Upper lobe of right lung (tissue), 1 donor: ENCODE measurements at regions of chr6 and their contacts with region 1.

Region 1: GRCh38 chr6:2931970-2932748 is 29.1 kb upstream of the SERPINB9 start:
- DNase-seq: peak; percentile 75
- ATAC-seq: peak; percentile 99
- H3K4me3 ChIP-seq: no peak overlapping the region
- H3K27ac ChIP-seq: no peak overlapping the region
- H3K4me1 ChIP-seq: peaks cover 4% of the 10 kb centered on the region
- H3K27me3 ChIP-seq: no peaks in the 10 kb centered on the region
- CTCF ChIP-seq: peak; percentile 98

Region 2: DNA sequence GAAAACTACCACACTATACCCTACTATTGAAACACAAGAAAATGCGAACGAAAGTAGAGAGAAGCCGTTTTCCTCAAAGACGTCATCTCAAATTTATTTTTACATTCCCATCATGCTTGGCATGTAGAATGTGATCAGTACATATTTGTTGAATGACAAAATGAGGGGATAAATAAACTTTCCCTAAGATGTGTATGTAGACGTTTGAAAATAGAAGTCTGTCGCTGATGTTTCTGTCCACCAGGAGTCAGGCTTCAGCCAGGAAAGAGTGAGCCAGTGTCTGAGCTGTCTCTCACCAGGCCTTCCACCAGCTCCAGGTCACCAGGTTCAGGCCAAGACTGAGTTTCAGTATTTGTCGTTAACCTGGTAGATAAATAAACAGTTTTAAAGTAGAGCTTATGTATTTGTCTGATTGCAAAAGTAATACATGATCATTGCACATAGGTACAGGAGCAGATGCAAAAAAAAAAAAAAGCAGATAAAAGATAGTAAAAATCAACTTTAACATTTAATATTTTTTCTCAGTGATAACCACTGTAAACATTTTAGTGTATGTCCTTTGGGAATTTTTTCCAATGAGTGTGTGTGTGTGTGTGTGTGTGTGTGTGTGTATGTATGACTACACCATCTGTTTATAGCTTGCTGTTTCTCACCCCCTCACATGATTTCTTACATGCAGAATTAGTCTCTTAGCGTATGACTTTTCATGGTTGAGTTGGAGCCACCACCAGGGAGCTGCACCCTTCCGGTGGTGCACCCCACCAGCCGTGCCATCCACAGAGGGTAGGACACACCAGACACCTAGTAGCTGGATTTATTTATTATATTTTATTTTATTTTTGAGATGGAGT is 140.8 kb before region 1 on chr6:
- intact Hi-C with region 1: loop called (anchors 10 kb)
- DNase-seq: no peak
- ATAC-seq: peak; percentile 87
- H3K4me3 ChIP-seq: no peak overlapping the region
- H3K27ac ChIP-seq: peak overlapping the region; percentile 71
- H3K4me1 ChIP-seq: peaks cover 25% of the 10 kb centered on the region
- H3K27me3 ChIP-seq: no peaks in the 10 kb centered on the region
- CTCF ChIP-seq: peak; percentile 79

Region 3: GRCh38 chr6:2841264-2842138 is 90.7 kb before region 1 on chr6 and contains the start of gene SERPINB1:
- intact Hi-C with region 1: loop called (anchors 10 kb)
- DNase-seq: peak; percentile 98
- ATAC-seq: peak; percentile 95
- H3K4me3 ChIP-seq: peak within 1 kb of the TSS; percentile 65
- H3K27ac ChIP-seq: peak within 1 kb of the TSS; percentile 95
- H3K4me1 ChIP-seq: peaks cover 39% of the 10 kb centered on the region
- H3K27me3 ChIP-seq: no peaks in the 10 kb centered on the region
- CTCF ChIP-seq: no peak
- total RNA-seq, gene SERPINB1: 101 TPM